ENCODE measurements at regions of chr19 and their contacts with region 1.

Region 1: DNA sequence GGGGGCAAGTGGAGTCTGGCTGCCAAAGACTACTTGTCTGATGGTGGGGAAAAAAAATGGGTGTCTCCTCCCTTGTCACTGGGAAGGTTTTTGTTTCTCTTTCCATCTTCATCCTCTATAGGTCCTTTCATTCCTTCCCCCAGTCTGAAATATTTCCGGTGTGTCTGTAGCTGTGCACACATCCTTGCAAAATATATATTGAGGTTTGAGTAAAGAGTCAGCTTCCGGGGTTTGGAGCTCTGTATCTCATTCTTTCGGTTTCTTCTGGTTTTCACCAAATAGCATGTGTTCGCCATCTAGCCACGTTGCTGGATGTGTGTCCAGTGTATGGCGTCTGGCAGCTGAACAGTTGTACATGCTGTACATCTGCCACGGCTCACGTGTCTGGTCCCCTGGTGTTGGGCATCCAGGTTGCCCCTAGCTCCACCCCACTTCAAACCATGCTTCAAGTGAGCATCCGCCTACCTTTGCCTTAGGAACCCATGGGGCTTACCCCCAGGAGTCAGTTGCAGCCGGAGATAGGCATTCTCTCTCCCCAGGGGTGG is 142.2 kb downstream of the SIPA1L3 start:
- DNase-seq: peak; percentile 79
- H3K4me3 ChIP-seq: peak overlapping the region; percentile 53
- H3K27ac ChIP-seq: peak overlapping the region; percentile 100
- H3K4me1 ChIP-seq: peaks cover 72% of the 10 kb centered on the region
- CTCF ChIP-seq: no peak

Region 2: DNA sequence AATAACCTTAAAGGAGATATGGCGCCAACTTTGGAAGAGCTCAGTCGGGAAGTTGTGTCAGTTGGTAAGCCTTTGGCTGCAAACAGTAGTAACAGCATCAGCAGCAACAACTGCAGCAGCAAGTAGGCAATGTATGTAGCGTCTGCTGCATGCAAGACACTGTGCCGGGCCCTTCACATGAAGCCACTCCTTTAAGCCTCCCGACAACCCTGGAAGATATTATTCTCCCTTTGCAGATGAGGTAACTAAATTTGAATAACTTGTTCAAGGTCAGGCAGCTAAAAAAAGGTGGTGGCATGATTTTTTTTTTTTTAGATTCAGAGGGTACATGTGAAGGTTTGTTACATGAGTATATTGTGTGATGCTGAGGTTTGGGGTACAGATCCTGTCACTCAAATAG is 122.5 kb before region 1 on chr19:
- CTCF ChIA-PET with region 1: interaction called, 3 read pairs
- POLR2A ChIA-PET with region 1: interaction called, 6 read pairs
- intact Hi-C with region 1: loop called (anchors 1 kb)
- DNase-seq: peak; percentile 70
- H3K4me3 ChIP-seq: peak overlapping the region; percentile 58
- H3K27ac ChIP-seq: peak overlapping the region; percentile 99
- H3K4me1 ChIP-seq: peaks cover 97% of the 10 kb centered on the region
- CTCF ChIP-seq: no peak

Region 3: GRCh38 chr19:37979547-37980082 is 69.6 kb before region 1 on chr19:
- CTCF ChIA-PET with region 1: interaction called, 8 read pairs
- POLR2A ChIA-PET with region 1: interaction called, 5 read pairs
- intact Hi-C with region 1: loop called (anchors 1 kb)
- DNase-seq: peak; percentile 81
- H3K4me3 ChIP-seq: peak overlapping the region; percentile 56
- H3K27ac ChIP-seq: peak overlapping the region; percentile 100
- H3K4me1 ChIP-seq: peaks cover 90% of the 10 kb centered on the region
- CTCF ChIP-seq: no peak

Region 4: DNA sequence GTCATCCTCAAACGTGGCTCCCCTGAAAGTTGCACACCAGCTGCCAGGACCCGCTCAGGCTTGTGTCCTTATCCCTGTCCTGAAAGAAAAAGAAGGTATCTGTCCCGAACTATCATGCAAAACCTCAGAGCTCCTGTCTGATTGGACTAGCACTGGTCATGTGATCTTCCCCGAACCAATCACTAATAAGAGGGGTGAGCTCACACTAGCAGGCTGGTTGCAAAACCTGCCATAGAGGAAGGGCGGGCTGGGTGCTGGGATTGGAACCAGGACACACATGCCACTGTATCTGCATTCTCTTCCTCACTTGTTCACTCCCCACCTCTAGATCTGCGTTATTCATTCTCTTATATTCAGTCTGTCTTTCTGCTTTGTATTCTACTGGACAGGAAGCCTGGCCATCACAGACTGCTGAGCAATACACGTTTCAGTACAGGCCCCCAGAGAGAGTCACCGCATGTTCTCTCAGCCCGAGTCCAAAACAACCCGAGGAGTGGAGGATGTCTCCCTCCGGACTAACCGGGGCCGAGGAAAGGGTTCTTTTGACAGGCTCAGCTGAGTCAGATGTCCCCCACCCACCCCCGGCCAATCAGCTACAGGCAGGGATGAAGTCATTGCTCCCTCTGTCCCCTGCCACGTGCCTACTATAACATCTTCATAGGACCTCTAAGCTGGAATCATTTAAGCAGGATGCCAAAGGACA is 44.5 kb before region 1 on chr19:
- CTCF ChIA-PET with region 1: interaction called, 4 read pairs
- POLR2A ChIA-PET with region 1: interaction called, 8 read pairs
- intact Hi-C with region 1: loop called (anchors 1 kb)
- DNase-seq: peak; percentile 93
- H3K4me3 ChIP-seq: peak overlapping the region; percentile 67
- H3K27ac ChIP-seq: peak overlapping the region; percentile 72
- H3K4me1 ChIP-seq: peaks cover 56% of the 10 kb centered on the region
- CTCF ChIP-seq: no peak

Region 5: GRCh38 chr19:38229585-38230073 is 180.5 kb after region 1 on chr19:
- CTCF ChIA-PET with region 1: no interaction called
- POLR2A ChIA-PET with region 1: no interaction called
- intact Hi-C with region 1: loop called (anchors 2 kb)
- DNase-seq: peak; percentile 96
- H3K4me3 ChIP-seq: peak overlapping the region; percentile 82
- H3K27ac ChIP-seq: no peak overlapping the region
- H3K4me1 ChIP-seq: peaks cover 13% of the 10 kb centered on the region
- CTCF ChIP-seq: no peak

Measured in OCI-LY7 (cell line).